A673 (cell line): ENCODE measurements at regions of chr3 and their contacts with region 1.

Region 1: DNA sequence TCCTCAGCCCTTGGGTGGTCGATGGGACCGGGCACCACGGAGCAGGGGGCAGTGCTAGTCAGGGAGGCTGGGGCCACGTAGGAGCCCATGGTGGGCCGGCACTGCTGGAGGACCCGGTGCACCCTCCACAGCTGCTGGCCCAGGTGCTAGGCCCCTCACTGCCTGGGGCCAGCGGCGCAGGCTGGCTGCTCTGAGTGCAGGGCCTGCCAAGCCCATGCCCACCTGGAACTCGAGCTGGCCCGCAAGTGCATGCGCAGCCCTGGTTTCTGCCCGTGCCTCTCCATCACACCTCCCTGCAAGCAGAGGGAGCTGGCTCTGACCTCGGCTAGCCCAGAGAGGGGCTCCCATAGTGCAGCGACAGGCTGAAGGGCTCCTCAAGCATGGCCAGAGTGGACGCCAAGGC is 42.1 kb downstream of the KLHDC8B start:
- DNase-seq: no peak
- H3K4me3 ChIP-seq: no peak overlapping the region
- H3K27ac ChIP-seq: no peak overlapping the region
- H3K4me1 ChIP-seq: no peaks in the 10 kb centered on the region
- H3K27me3 ChIP-seq: no peaks in the 10 kb centered on the region
- CTCF ChIP-seq: no peak

Region 2: GRCh38 chr3:48663415-48664312 is 549.9 kb before region 1 on chr3:
- CTCF ChIA-PET with region 1: no interaction called
- POLR2A ChIA-PET with region 1: no interaction called
- intact Hi-C with region 1: no loop called
- DNase-seq: peak; percentile 91
- H3K4me3 ChIP-seq: peak overlapping the region; percentile 56
- H3K27ac ChIP-seq: peak overlapping the region; percentile 80
- H3K4me1 ChIP-seq: no peaks in the 10 kb centered on the region
- H3K27me3 ChIP-seq: no peaks in the 10 kb centered on the region
- CTCF ChIP-seq: peak; percentile 70

Region 3: DNA sequence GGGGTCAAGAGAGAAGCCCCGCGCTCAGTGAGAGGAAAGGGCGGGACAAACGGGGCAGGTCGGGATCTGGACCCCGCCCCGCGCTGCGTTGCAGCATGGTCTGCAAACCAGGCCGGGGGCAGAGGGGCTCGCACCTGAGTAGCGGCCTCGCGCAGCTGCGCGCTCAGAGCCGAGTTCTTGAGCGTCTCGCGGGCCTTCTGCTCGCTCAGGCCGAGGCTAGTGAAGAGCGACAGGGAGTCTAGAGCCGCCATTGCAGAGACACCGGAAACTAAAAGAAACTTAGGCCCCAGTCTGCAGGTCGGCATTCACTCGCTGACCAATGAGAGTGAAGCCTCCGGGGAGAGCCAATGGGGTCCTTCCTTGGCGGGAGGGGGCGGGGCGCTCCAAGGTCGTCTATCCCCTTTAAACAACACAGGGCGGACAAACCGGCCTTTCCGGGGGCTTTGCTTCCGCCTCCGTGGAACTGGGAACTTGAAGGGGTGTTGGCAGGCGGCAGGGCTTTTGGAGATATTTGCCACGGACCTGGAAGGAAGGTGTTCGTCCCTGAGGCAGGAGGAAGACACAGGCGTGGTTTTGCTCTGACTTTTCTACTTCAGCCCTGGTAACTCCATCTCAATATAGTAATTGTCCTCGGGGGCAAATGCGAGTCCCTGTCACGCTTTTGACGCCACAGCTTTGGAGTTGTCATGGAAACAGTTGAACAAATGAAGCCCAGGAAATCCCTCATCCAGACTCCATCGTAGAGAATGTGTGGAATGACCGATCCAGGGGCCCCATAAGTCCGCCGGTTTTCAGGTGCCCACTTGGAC is 108.9 kb before region 1 on chr3 and contains the start of gene QARS1:
- CTCF ChIA-PET with region 1: no interaction called
- POLR2A ChIA-PET with region 1: no interaction called
- intact Hi-C with region 1: no loop called
- DNase-seq: peak; percentile 90
- H3K4me3 ChIP-seq: peak within 1 kb of the TSS; percentile 70
- H3K27ac ChIP-seq: peak within 1 kb of the TSS; percentile 85
- H3K4me1 ChIP-seq: peaks cover 7% of the 10 kb centered on the region
- H3K27me3 ChIP-seq: no peaks in the 10 kb centered on the region
- CTCF ChIP-seq: no peak
- total RNA-seq, gene QARS1: 186 and 188 TPM in 2 replicates

Region 4: DNA sequence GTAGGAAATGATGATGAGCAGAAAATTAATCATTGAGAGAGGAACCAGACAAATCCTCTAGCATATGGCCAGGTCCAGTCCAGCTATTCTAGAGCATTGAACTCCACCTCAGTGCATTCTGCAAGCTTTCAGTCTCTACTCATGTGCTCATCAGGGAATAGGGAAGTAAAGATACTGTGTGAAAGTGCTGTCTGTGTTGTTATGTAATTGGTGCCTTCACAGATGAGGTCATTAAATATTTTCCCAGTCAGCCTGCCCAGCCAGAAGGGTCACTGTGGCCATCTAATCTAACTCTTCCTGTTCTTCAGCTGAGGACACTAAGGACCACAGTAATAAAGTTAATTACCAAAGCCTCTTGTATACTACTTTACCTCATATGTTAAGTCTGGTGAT is 35.3 kb after region 1 on chr3:
- CTCF ChIA-PET with region 1: interaction called, 14 read pairs
- POLR2A ChIA-PET with region 1: no interaction called
- intact Hi-C with region 1: no loop called
- DNase-seq: no peak
- H3K4me3 ChIP-seq: no peak overlapping the region
- H3K27ac ChIP-seq: no peak overlapping the region
- H3K4me1 ChIP-seq: no peaks in the 10 kb centered on the region
- H3K27me3 ChIP-seq: no peaks in the 10 kb centered on the region
- CTCF ChIP-seq: no peak